ENCODE measurements at regions of chr3 and their contacts with region 1.

Region 1: DNA sequence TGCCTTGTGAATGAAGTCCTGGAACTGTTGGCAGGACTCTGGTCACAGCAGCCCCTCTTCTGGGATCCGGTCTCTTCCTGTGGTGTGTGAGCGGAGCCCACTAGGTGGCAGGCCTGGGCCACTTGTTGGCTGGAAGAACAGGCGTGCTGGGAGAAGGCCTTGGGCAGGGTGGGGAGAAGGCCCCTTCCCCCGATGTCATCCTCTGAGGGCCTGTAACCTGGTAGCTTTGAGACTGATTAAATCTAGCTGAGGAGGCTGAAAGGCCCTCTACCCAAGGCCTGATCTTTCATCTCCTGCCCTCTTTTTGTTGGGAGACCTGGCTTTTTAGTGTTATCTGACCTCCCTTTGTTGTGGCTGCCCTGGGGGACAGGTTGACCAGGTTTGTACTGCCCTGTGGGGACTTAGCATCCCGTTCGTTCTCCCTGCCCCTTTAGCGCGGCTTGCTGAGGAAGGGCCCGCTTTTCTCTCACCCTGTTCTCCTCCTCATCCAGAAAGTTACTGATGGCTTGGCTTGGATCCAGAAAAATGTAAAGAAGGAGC is 48.3 kb downstream of the CHCHD6 start:
- DNase-seq: peak; percentile 72 to 78
- H3K4me3 ChIP-seq: no peak overlapping the region
- H3K27ac ChIP-seq: no peak overlapping the region
- H3K4me1 ChIP-seq: peaks cover 4 to 9% of the 10 kb centered on the region in 2 donors
- H3K27me3 ChIP-seq: no peaks in the 10 kb centered on the region
- CTCF ChIP-seq: peak; percentile 51 to 90 (median 83)
- POLR2A ChIP-seq: no peak

Region 2: GRCh38 chr3:126870608-126871210 is 118.3 kb after region 1 on chr3:
- intact Hi-C with region 1: loop called (anchors 10 kb)
- DNase-seq: no peak
- H3K4me3 ChIP-seq: no peak overlapping the region
- H3K27ac ChIP-seq: no peak overlapping the region
- H3K4me1 ChIP-seq: peaks cover 0 to 11% of the 10 kb centered on the region in 2 donors
- H3K27me3 ChIP-seq: no peaks in the 10 kb centered on the region
- CTCF ChIP-seq: no peak
- POLR2A ChIP-seq: no peak

Region 3: GRCh38 chr3:126982471-126983175 is 230.2 kb after region 1 on chr3 and contains the start of gene PLXNA1:
- intact Hi-C with region 1: loop called (anchors 5 kb)
- DNase-seq: peak; percentile 64 to 66
- H3K4me3 ChIP-seq: peak within 1 kb of the TSS; percentile 62 to 78 (median 68)
- H3K27ac ChIP-seq: peak within 1 kb of the TSS in 2 of 3 donors; percentile 62 to 75
- H3K4me1 ChIP-seq: peaks cover 14 to 40% of the 10 kb centered on the region in 2 donors
- H3K27me3 ChIP-seq: no peaks in the 10 kb centered on the region
- CTCF ChIP-seq: peak; percentile 60 to 84 (median 78)
- POLR2A ChIP-seq: peak in 1 of 2 donors; percentile 56
- total RNA-seq, gene PLXNA1: 16.0 to 28.0 (median 22.8) TPM

Region 4: GRCh38 chr3:127172781-127173515 is 420.6 kb after region 1 on chr3:
- intact Hi-C with region 1: loop called (anchors 5 kb)
- DNase-seq: peak; percentile 55 to 56
- H3K4me3 ChIP-seq: no peak overlapping the region
- H3K27ac ChIP-seq: peak overlapping the region in 1 of 3 donors; percentile 17
- H3K4me1 ChIP-seq: peaks cover 19 to 33% of the 10 kb centered on the region in 2 donors
- H3K27me3 ChIP-seq: no peaks in the 10 kb centered on the region
- CTCF ChIP-seq: no peak
- POLR2A ChIP-seq: no peak

Region 5: DNA sequence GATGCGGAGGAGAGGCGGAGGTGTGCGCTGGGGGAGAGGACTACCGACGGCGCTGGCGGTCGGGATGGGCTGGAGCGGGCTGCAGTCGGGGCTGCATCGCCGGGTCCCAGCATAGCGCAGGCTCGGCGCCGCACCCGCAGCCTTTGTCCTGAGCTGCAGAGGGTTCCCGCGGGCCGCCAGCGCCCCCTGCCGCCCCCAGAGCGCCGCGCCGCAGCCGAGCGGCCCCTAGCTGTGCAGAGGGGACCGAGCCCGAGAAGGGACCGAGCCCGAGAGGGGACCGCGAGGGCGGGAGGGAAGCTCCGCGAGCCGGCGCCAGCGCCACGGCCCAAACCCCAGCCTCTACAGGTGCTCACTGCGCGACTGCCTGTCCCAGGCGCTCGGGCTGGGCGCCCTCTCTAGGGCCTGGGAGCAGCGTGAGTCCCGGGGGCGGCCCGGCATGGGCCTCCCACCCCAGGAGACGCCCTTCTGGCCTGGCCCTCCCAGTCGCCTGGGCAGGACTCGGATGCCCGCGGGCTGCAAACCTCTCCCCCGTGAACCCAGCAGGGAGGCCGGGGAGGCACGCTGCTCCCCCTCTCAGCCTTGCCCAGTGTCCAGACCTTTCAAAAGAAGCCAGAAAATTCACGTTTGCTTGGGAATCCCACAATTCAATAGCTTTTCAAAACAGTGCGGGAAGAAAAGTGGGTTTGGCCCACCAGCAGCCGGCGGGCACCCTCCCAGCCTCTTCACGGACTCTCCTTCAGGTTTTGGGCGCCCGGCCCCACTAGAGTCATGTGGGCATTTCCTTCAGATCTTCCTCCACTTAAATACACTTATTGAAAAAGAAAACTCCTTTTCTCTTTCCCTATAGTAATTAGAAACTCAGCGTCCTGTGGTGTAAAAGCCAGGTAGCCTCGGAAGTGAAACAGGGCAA is 703.4 kb after region 1 on chr3:
- intact Hi-C with region 1: loop called (anchors 10 kb)
- DNase-seq: peak; percentile 73 to 74
- H3K4me3 ChIP-seq: no peak overlapping the region
- H3K27ac ChIP-seq: no peak overlapping the region
- H3K4me1 ChIP-seq: peaks cover 4 to 22% of the 10 kb centered on the region in 2 donors
- H3K27me3 ChIP-seq: peaks cover 17% of the 10 kb centered on the region
- CTCF ChIP-seq: peak; percentile 53 to 97 (median 91)
- POLR2A ChIP-seq: no peak

Measured in thyroid gland (tissue), 4 donors.